Activated B cell treated with CpG ODN at 0.5 μM for 24 hours (primary cell): ENCODE measurements at regions of chr16 and their contacts with region 1.

Region 1: GRCh38 chr16:21263640-21264570 is 14.2 kb downstream of the CRYM start:
- DNase-seq: no peak
- ATAC-seq: peak; percentile 82
- H3K4me3 Mint-ChIP-seq: peak overlapping the region; percentile 47
- H3K27ac Mint-ChIP-seq: peak overlapping the region; percentile 72
- H3K4me1 Mint-ChIP-seq: peaks cover 41% of the 10 kb centered on the region
- H3K27me3 Mint-ChIP-seq: peaks cover 9% of the 10 kb centered on the region
- CTCF ChIP-seq: no peak

Region 2: DNA sequence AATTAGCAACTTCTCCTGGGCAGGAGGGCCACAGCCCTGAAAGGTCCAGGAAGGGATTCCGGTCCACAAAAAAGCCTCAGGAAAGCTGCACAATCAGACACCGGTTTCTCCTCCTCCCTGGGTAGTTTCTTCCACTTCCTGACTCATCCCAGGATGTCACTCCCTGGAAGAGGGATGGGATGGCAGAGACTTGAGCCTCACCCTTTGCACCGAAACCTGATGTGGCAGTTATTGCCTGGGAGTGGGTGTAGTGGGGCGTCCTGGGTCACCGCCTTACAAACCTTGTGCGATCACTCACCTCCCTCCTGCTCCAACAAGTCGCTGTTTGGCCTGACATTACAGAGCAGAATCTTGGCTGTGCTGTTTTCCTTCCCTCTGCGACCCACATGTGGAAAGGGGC is 292.5 kb before region 1 on chr16:
- CTCF ChIA-PET with region 1: no interaction called
- POLR2A ChIA-PET with region 1: no interaction called
- intact Hi-C with region 1: no loop called
- DNase-seq: no peak
- ATAC-seq: no peak
- H3K4me3 Mint-ChIP-seq: no peak overlapping the region
- H3K27ac Mint-ChIP-seq: no peak overlapping the region
- H3K4me1 Mint-ChIP-seq: no peaks in the 10 kb centered on the region
- H3K27me3 Mint-ChIP-seq: peaks cover 3% of the 10 kb centered on the region
- CTCF ChIP-seq: no peak

Region 3: GRCh38 chr16:21126518-21126917 is 137.4 kb before region 1 on chr16:
- CTCF ChIA-PET with region 1: no interaction called
- POLR2A ChIA-PET with region 1: no interaction called
- intact Hi-C with region 1: no loop called
- DNase-seq: no peak
- ATAC-seq: no peak
- H3K4me3 Mint-ChIP-seq: no peak overlapping the region
- H3K27ac Mint-ChIP-seq: no peak overlapping the region
- H3K4me1 Mint-ChIP-seq: no peaks in the 10 kb centered on the region
- H3K27me3 Mint-ChIP-seq: no peaks in the 10 kb centered on the region
- CTCF ChIP-seq: no peak

Region 4: DNA sequence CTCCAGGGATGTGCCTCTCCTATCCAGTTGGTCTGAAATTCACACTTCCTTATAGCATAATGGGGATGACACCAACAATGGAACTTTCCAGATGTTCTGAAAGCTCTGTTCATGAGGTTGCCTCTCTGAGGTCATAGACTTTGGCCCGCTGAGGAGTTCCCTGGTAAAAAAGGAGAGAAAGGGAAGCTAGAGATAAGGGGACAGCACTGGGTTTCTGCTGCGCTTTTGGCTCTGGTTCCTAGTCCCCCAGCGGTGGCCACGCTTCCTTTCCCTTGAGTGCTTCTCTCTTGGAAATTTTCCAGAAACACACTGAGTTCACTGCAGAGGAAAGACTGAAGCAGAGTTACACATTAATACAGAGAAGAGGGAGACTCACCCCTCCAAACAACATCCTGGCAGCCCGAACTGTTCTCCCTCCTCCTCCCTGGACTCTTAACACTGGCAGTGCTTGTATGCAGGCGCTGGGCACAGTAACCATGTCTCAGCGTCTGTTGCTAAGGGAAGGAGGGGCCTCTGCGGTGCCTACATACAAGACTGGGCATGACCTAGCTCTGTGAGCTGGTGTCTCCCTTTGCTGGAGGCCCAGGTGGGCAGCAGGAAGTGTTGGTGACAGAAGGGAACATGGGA is 113.4 kb before region 1 on chr16 and contains the start of gene DNAH3:
- CTCF ChIA-PET with region 1: no interaction called
- POLR2A ChIA-PET with region 1: no interaction called
- intact Hi-C with region 1: no loop called
- DNase-seq: no peak
- ATAC-seq: no peak
- H3K4me3 Mint-ChIP-seq: no peak within 1 kb of the TSS
- H3K27ac Mint-ChIP-seq: no peak within 1 kb of the TSS
- H3K4me1 Mint-ChIP-seq: no peaks in the 10 kb centered on the region
- H3K27me3 Mint-ChIP-seq: peaks cover 24% of the 10 kb centered on the region
- CTCF ChIP-seq: no peak
- total RNA-seq, gene DNAH3: not detected in 2 replicates

Region 5: DNA sequence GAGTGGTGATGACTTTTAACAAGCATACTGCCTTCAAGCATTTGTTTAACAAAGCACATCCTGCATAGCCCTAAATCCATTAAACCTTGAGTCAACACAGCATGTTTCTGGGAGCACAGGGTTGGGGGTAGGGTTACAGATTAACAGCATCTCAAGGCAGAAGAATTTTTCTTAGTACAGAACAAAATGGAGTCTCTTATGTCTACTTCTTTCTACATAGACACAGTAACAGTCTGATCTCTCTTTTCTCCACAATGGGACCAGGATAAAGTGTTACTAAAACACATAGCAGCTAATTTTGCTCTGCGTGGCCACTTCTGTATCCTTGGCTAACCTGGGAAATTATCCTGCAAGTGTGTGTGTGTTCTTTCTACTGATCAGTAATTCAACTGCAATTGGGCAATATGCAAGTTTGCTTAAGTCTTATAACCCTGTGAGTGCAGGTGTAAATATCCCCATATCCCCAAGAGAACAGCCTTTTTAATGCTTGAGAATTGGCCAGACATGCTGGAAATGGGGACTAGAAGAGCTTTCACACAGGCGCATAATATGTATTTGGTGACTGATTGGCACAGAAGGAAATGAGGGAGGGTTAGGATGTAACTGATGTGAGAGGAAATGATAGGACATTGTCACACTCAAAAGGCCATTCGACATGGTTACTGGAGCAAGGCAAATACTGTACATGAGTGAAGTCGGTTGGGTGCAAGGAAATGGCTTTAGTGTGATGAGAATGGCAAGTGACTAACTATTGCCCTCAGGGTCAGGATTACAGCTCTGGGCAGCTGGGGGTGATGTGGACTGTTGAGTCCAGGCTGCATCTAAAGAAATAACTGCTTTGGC is 41.2 kb before region 1 on chr16:
- CTCF ChIA-PET with region 1: no interaction called
- POLR2A ChIA-PET with region 1: no interaction called
- intact Hi-C with region 1: loop called (anchors 5 kb)
- DNase-seq: no peak
- ATAC-seq: no peak
- H3K4me3 Mint-ChIP-seq: no peak overlapping the region
- H3K27ac Mint-ChIP-seq: no peak overlapping the region
- H3K4me1 Mint-ChIP-seq: peaks cover 3% of the 10 kb centered on the region
- H3K27me3 Mint-ChIP-seq: peaks cover 36% of the 10 kb centered on the region
- CTCF ChIP-seq: no peak

Region 6: DNA sequence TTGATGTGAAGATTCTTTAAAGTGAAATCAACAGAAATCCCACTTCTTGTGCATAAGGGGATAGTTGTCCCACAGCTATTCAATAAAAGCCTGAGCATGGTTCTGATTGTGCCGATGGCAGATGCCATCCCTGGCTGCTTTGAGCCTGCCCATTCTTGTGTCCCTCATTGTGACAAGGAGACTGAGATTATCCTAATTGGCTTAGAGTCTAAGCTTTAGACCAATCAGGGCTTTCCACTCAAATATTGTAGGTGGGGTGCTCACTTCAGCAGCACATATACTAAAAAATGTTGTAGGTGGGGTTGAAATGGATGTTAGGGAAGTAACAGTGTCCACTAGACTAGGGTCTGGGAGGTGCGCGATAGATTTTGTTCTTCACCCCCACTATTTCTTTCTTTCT is 879.4 kb after region 1 on chr16:
- CTCF ChIA-PET with region 1: no interaction called
- POLR2A ChIA-PET with region 1: no interaction called
- intact Hi-C with region 1: no loop called
- DNase-seq: no peak
- ATAC-seq: no peak
- H3K4me3 Mint-ChIP-seq: no peak overlapping the region
- H3K27ac Mint-ChIP-seq: no peak overlapping the region
- H3K4me1 Mint-ChIP-seq: no peaks in the 10 kb centered on the region
- H3K27me3 Mint-ChIP-seq: peaks cover 15% of the 10 kb centered on the region
- CTCF ChIP-seq: no peak